Endothelial cell of umbilical vein (primary cell): ENCODE measurements at regions of chr2 and their contacts with region 1.

Region 1: GRCh38 chr2:97740590-97741182 is 27.3 kb downstream of the ZAP70 start:
- DNase-seq: peak; percentile 23
- H3K4me3 ChIP-seq: no peak overlapping the region
- H3K27ac ChIP-seq: no peak overlapping the region
- H3K4me1 ChIP-seq: peaks cover 7% of the 10 kb centered on the region
- H3K27me3 ChIP-seq: no peaks in the 10 kb centered on the region
- CTCF ChIP-seq: peak; percentile 69 to 82
- POLR2A ChIP-seq: no peak

Region 2: DNA sequence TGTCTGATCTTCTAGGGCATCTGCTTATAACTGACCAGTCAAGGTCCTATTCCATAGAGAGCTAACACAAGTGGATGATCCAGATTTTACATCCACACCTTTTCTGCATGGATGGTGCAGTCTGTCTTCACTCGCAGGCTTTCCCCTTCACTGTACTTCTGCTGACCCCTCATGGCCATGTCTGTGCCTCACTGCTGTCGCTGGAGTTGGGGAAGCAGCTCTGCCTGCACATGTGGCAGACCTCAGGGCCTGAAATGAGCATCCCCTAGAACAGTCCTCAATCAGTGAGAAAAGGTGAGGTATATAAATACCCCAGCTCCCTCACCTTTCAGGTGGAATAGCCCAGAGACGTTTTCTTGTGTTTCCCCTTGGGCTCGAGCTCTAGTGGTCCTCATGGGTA is 384.8 kb before region 1 on chr2:
- CTCF ChIA-PET with region 1: no interaction called
- POLR2A ChIA-PET with region 1: no interaction called
- dilution Hi-C with region 1: no loop called
- intact Hi-C with region 1: no loop called
- DNase-seq: no peak
- H3K4me3 ChIP-seq: no peak overlapping the region
- H3K27ac ChIP-seq: no peak overlapping the region
- H3K4me1 ChIP-seq: no peaks in the 10 kb centered on the region
- H3K27me3 ChIP-seq: peaks cover 36 to 62% of the 10 kb centered on the region in 2 experiments
- CTCF ChIP-seq: peak in 1 of 2 donors; percentile 6
- POLR2A ChIP-seq: no peak

Region 3: DNA sequence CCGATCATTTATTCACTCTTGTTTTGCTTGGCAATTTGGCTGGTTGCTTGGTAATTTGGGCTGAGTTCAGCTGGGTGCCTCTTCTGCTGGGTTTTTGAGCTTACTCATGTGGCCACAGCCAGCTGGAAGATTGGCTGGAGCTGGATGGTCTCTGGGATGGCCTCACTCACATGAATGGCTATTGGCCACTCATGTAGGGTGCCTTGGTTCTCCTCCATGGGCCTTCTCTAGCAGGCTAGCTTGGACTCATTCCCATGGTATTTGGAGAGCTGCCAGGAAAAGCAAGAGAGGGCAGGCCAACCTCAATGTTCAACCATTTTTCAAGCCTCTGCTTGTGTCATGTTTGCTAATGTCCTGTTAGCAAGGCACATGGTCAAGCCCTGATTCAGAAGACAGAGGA is 10.4 kb before region 1 on chr2:
- CTCF ChIA-PET with region 1: interaction called, 14 read pairs
- POLR2A ChIA-PET with region 1: no interaction called
- dilution Hi-C with region 1: no loop called
- intact Hi-C with region 1: no loop called
- DNase-seq: no peak
- H3K4me3 ChIP-seq: no peak overlapping the region
- H3K27ac ChIP-seq: no peak overlapping the region
- H3K4me1 ChIP-seq: no peaks in the 10 kb centered on the region
- H3K27me3 ChIP-seq: no peaks in the 10 kb centered on the region
- CTCF ChIP-seq: no peak
- POLR2A ChIP-seq: no peak

Region 4: DNA sequence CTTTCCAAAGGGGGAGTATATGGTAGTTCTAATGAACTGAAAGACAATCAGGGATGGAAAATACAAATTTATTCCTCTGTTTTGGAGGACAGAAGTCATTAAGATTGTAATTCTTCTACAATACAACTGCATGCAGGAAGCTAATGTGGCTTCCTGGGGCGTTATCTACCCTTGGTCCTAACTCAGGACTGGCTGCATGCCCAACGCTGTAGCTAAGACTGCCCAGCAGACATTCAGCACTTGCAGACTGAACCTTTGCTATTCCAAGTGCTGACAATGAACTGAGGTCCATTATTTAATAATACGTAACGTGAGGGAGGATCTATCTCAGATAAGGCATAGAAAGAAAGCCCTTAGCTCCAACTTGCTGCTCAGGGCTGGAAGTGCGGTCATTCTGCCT is 25.9 kb after region 1 on chr2:
- CTCF ChIA-PET with region 1: interaction called, 14 read pairs
- POLR2A ChIA-PET with region 1: no interaction called
- dilution Hi-C with region 1: no loop called
- intact Hi-C with region 1: no loop called
- DNase-seq: no peak
- H3K4me3 ChIP-seq: no peak overlapping the region
- H3K27ac ChIP-seq: no peak overlapping the region
- H3K4me1 ChIP-seq: no peaks in the 10 kb centered on the region
- H3K27me3 ChIP-seq: no peaks in the 10 kb centered on the region
- CTCF ChIP-seq: no peak
- POLR2A ChIP-seq: no peak

Region 5: GRCh38 chr2:97774425-97774824 is 33.7 kb after region 1 on chr2:
- CTCF ChIA-PET with region 1: interaction called, 16 read pairs
- POLR2A ChIA-PET with region 1: no interaction called
- dilution Hi-C with region 1: no loop called
- intact Hi-C with region 1: no loop called
- DNase-seq: peak; percentile 12
- H3K4me3 ChIP-seq: no peak overlapping the region
- H3K27ac ChIP-seq: no peak overlapping the region
- H3K4me1 ChIP-seq: no peaks in the 10 kb centered on the region
- H3K27me3 ChIP-seq: no peaks in the 10 kb centered on the region
- CTCF ChIP-seq: peak; percentile 47 to 69
- POLR2A ChIP-seq: no peak

Region 6: GRCh38 chr2:97844311-97844859 is 103.7 kb after region 1 on chr2:
- CTCF ChIA-PET with region 1: no interaction called
- POLR2A ChIA-PET with region 1: no interaction called
- dilution Hi-C with region 1: no loop called
- intact Hi-C with region 1: no loop called
- DNase-seq: no peak
- H3K4me3 ChIP-seq: no peak overlapping the region
- H3K27ac ChIP-seq: no peak overlapping the region
- H3K4me1 ChIP-seq: no peaks in the 10 kb centered on the region
- H3K27me3 ChIP-seq: no peaks in the 10 kb centered on the region
- CTCF ChIP-seq: no peak
- POLR2A ChIP-seq: no peak

Region 7: GRCh38 chr2:98118161-98118560 is 377.5 kb after region 1 on chr2:
- CTCF ChIA-PET with region 1: no interaction called
- POLR2A ChIA-PET with region 1: no interaction called
- dilution Hi-C with region 1: no loop called
- intact Hi-C with region 1: no loop called
- DNase-seq: no peak
- H3K4me3 ChIP-seq: no peak overlapping the region
- H3K27ac ChIP-seq: no peak overlapping the region
- H3K4me1 ChIP-seq: no peaks in the 10 kb centered on the region
- H3K27me3 ChIP-seq: peaks cover 7 to 9% of the 10 kb centered on the region in 2 experiments
- CTCF ChIP-seq: no peak
- POLR2A ChIP-seq: no peak